Activated T-helper 2 cell treated with anti-CD3 and anti-CD28 coated beads, Interferon-gamma antibody, Interleukin-2, Interleukin-4, amounts not matched to agents 10 μg/mL and 5 μg/mL and 100 μg/mL, durations not matched to agents 14 hours and 24 hours and 36 hours (primary cell): ENCODE measurements at regions of chr19 and their contacts with region 1.

Region 1: GRCh38 chr19:4182084-4182810 is at the starts of genes ANKRD24 and SIRT6:
- DNase-seq: peak; percentile 96
- H3K4me3 Mint-ChIP-seq: peak within 1 kb of the TSS; percentile 99
- H3K27ac Mint-ChIP-seq: peak within 1 kb of the TSS; percentile 92
- H3K4me1 Mint-ChIP-seq: peaks cover 14% of the 10 kb centered on the region
- H3K27me3 Mint-ChIP-seq: no peaks in the 10 kb centered on the region
- total RNA-seq, gene ANKRD24: 0.30 and 0.50 TPM in 2 replicates
- total RNA-seq, gene SIRT6: 34.6 and 42.4 TPM in 2 replicates

Region 2: GRCh38 chr19:4007021-4007835 is 175.0 kb before region 1 on chr19 and contains the start of gene PIAS4:
- intact Hi-C with region 1: loop called (anchors 1 kb)
- DNase-seq: peak; percentile 94
- H3K4me3 Mint-ChIP-seq: peak within 1 kb of the TSS; percentile 86
- H3K27ac Mint-ChIP-seq: peak within 1 kb of the TSS; percentile 73
- H3K4me1 Mint-ChIP-seq: peaks cover 8% of the 10 kb centered on the region
- H3K27me3 Mint-ChIP-seq: no peaks in the 10 kb centered on the region
- total RNA-seq, gene PIAS4: 31.5 and 36.3 TPM in 2 replicates